PC-9 (cell line): ENCODE measurements at regions of chr18 and their contacts with region 1.

Region 1: DNA sequence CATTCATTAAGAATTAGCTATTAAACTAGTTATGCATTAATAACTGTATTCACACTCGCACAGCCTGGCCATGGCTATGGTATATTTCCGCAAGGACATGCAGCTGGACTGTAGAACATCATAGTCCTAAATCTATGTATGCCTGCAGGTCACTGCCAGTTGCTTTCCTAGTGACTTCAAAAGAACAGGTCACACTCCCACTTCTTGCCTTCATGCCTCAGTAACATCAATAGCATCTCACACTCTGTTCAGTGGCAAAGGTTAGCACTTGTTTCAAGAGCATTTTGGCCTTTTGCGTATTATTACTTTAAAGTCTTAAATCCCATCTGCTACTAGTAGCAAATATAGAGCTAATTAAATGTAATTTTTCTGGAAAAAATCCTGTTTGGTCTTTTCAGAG is 131.4 kb upstream of the DCC start:
- DNase-seq: no peak
- H3K4me3 ChIP-seq: no peak overlapping the region
- H3K27ac ChIP-seq: no peak overlapping the region
- H3K4me1 ChIP-seq: no peaks in the 10 kb centered on the region
- H3K27me3 ChIP-seq: no peaks in the 10 kb centered on the region
- CTCF ChIP-seq: no peak

Region 2: DNA sequence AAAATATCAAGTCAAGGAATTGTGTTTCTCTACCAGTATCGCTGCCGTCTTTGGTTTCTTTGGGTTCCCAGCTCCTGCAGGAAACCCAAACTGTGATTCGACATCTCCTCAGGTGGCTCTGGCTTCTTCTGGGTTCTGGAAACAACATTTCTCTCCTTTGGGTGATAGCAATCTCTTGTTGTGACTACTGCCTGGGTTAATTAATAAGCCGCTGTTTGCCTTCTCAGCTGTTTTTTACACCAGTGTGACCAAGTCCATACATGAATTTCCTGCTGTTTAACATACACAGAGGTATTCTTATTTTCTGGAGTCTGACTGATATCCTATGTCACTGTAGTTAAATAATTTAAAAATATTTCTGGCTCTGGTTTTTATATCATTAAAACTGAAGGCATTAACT is 18.9 kb after region 1 on chr18:
- CTCF ChIA-PET with region 1: no interaction called
- POLR2A ChIA-PET with region 1: no interaction called
- intact Hi-C with region 1: loop called (anchors 1 kb)
- DNase-seq: no peak
- H3K4me3 ChIP-seq: no peak overlapping the region
- H3K27ac ChIP-seq: no peak overlapping the region
- H3K4me1 ChIP-seq: no peaks in the 10 kb centered on the region
- H3K27me3 ChIP-seq: no peaks in the 10 kb centered on the region
- CTCF ChIP-seq: no peak